B cell (primary cell): ENCODE measurements at regions of chr10 and their contacts with region 1.

Region 1: GRCh38 chr10:22573820-22574569 is 140.4 kb downstream of the PIP4K2A start:
- DNase-seq: peak; percentile 69
- ATAC-seq: peak; percentile 36
- H3K4me3 ChIP-seq: no peak overlapping the region
- H3K4me3 Mint-ChIP-seq: no peak overlapping the region
- H3K27ac ChIP-seq: no peak overlapping the region
- H3K27ac Mint-ChIP-seq: peak overlapping the region; percentile 46
- H3K4me1 ChIP-seq: peaks cover 5 to 7% of the 10 kb centered on the region in 2 donors
- H3K4me1 Mint-ChIP-seq: peaks cover 7% of the 10 kb centered on the region
- H3K27me3 ChIP-seq: no peaks in the 10 kb centered on the region
- H3K27me3 Mint-ChIP-seq: no peaks in the 10 kb centered on the region
- CTCF ChIP-seq: peak; percentile 69

Region 2: DNA sequence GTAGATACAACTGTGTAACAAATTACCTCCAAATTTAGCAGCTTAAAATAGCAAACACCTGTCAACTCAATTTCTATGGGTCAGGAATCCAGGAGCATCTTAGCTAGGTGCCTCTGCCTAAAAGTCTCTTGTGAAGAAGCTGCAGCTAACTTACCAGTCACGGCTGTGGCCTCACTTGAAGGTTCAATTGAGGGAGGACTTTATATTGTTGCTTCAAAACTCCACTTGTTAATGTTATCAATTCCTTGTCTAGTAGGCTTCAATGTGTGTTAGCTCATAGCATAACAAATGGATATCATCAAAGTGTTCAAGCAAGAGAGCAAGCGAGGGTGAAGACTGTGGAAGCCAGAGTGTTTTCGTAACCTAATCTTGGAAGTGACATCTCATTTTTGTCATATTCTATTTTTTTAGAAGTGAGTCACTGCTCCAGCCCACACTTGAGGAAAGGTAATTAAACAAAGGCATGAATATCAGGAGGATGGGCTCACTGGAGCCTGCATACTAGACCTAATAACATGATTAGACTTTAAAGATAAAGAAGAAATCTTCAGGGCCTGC is 55.7 kb before region 1 on chr10:
- CTCF ChIA-PET with region 1: no interaction called
- POLR2A ChIA-PET with region 1: no interaction called
- intact Hi-C with region 1: no loop called
- DNase-seq: no peak
- ATAC-seq: no peak
- H3K4me3 ChIP-seq: no peak overlapping the region
- H3K4me3 Mint-ChIP-seq: no peak overlapping the region
- H3K27ac ChIP-seq: no peak overlapping the region
- H3K27ac Mint-ChIP-seq: no peak overlapping the region
- H3K4me1 ChIP-seq: peaks cover 0 to 11% of the 10 kb centered on the region in 2 donors
- H3K4me1 Mint-ChIP-seq: peaks cover 2% of the 10 kb centered on the region
- H3K27me3 ChIP-seq: peaks cover 0 to 3% (median 1%) of the 10 kb centered on the region in 4 experiments
- H3K27me3 Mint-ChIP-seq: peaks cover 12% of the 10 kb centered on the region
- CTCF ChIP-seq: no peak

Region 3: DNA sequence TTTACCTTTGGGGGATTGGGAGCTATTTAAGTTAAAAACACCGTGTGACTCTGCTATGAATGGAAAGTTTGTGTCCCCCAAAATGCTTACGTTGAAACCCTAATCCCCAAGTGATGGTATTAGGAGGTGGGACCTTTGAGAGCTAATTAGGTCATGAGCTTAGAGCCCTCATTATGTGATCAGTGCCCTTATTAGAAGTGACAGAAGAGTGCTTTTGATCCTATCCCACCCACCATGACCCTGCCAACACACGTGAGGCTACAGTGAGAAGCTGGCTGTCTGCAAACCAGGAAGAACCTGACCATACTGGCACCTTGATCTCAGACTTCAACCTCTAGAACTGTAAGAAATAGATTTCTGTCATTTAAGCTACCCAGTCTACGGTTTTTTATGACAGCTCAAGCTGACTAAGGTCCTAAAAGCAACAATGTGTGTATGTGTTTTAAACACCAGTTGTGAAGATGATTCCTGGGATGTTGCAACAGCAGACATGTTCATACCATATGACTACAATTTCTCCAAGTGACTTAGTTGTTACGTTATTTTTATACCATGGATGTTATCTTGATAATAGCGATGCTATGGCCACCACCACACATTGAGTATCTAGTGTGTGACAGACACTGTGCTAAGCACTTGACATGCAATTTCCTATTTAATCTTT is 16.0 kb after region 1 on chr10:
- CTCF ChIA-PET with region 1: interaction called, 43 read pairs
- POLR2A ChIA-PET with region 1: no interaction called
- intact Hi-C with region 1: no loop called
- DNase-seq: no peak
- ATAC-seq: no peak
- H3K4me3 ChIP-seq: no peak overlapping the region
- H3K4me3 Mint-ChIP-seq: no peak overlapping the region
- H3K27ac ChIP-seq: no peak overlapping the region
- H3K27ac Mint-ChIP-seq: peak overlapping the region; percentile 3
- H3K4me1 ChIP-seq: peaks cover 22 to 26% of the 10 kb centered on the region in 2 donors
- H3K4me1 Mint-ChIP-seq: peaks cover 31% of the 10 kb centered on the region
- H3K27me3 ChIP-seq: no peaks in the 10 kb centered on the region
- H3K27me3 Mint-ChIP-seq: no peaks in the 10 kb centered on the region
- CTCF ChIP-seq: no peak

Region 4: GRCh38 chr10:22849077-22849805 is 275.2 kb after region 1 on chr10:
- CTCF ChIA-PET with region 1: interaction called, 14 read pairs
- POLR2A ChIA-PET with region 1: no interaction called
- intact Hi-C with region 1: loop called (anchors 5 kb)
- DNase-seq: no peak
- ATAC-seq: no peak
- H3K4me3 ChIP-seq: no peak overlapping the region
- H3K4me3 Mint-ChIP-seq: peak overlapping the region; percentile 48
- H3K27ac ChIP-seq: no peak overlapping the region
- H3K27ac Mint-ChIP-seq: no peak overlapping the region
- H3K4me1 ChIP-seq: peaks cover 0 to 8% of the 10 kb centered on the region in 2 donors
- H3K4me1 Mint-ChIP-seq: peaks cover 11% of the 10 kb centered on the region
- H3K27me3 ChIP-seq: peaks cover 0 to 8% (median 3%) of the 10 kb centered on the region in 4 experiments
- H3K27me3 Mint-ChIP-seq: peaks cover 12% of the 10 kb centered on the region
- CTCF ChIP-seq: no peak